ENCODE measurements at regions of chr9 and their contacts with region 1.

Region 1: DNA sequence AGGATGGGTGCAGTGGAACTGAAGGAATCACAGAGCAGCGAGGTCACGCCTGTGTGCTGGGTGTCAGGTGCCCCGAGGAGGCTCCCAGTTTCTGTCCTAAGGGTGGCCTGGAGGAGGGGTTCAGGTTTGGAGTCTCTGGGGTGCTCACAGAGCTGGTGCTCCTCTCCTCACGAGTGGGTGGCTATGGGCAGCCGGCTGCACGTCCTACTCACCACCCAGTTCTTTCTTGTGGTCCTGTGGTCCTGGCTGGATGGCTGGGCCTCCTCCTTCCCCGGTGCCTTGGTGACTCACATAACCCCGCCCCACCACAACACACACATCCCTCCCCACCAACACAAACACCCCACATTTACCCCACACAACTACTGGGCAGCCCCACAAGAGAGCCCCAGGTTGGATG is 9.9 kb upstream of the PTGS1 start:
- DNase-seq: no peak
- ATAC-seq: no peak
- H3K4me3 ChIP-seq: no peak overlapping the region
- H3K27ac ChIP-seq: no peak overlapping the region
- H3K4me1 ChIP-seq: no peaks in the 10 kb centered on the region
- H3K27me3 ChIP-seq: no peaks in the 10 kb centered on the region
- CTCF ChIP-seq: no peak
- POLR2A ChIP-seq: no peak

Region 2: DNA sequence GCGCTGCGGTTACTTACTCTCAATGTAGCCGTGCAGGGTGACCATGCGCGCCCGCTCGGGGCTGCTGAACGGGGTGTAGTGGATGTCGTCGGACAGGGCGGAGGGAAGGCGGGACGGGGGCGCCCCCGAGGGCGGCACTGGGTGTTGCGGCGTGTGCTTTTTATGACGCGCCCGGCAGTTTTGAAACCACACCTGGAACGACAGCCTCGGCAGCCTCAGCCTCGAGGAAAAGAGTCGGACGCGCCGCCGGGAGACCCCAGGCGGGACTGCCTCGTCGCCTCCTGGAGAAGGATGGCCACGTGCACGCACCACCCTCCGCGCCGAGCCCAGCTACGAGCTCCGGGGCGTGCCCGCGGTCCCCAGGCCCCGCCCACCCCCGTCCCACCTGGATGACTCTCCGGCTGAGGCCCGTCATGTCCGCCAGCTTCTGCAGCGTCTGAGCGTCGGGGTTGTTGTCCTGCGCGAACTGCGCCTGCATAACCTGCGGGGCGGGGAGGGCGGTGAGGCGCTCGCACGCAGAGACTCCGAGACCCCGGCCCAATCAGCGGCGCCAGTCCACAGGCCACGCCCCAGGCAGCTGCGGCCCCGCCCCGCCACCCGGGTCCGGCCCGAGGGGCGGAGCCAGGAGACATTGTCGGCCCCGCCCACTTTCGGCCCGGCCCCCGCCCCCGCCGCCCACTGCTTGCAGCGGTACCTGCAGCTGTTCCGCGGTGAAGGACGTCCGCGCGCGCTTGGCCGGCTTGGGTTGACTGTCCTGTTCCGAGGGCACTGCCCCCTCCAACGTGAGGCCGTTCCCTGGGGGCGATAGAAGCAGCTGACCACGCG is 147.1 kb before region 1 on chr9:
- in situ Hi-C with region 1: no loop called
- intact Hi-C with region 1: loop called (anchors 5 kb)
- DNase-seq: peak in 1 of 2 donors; percentile 21
- ATAC-seq: peak in 1 of 2 donors; percentile 33
- H3K4me3 ChIP-seq: peak overlapping the region; percentile 14 to 57 (median 33)
- H3K27ac ChIP-seq: no peak overlapping the region
- H3K4me1 ChIP-seq: peaks cover 6 to 10% of the 10 kb centered on the region in 2 donors
- H3K27me3 ChIP-seq: peaks cover 61 to 71% (median 64%) of the 10 kb centered on the region in 3 donors
- CTCF ChIP-seq: no peak
- POLR2A ChIP-seq: no peak

Region 3: DNA sequence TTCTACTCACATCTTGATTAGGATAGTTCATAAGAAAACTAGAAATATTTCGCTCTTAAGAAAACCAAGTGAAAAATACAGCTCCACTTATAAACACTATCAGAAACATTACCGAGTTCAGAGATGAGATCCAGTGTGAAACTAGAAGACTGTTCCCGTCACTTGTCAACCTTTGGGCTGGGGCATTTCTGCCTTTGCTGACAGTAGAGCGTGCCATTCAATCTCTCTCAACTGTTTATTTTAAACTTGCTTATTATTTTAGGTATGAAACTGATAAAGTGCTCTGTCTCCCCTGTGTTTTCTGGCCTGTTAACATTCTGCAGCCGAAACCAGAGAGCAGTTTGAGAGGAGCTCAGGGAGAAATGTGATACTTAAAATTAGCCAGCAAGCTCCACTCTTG is 79.5 kb before region 1 on chr9:
- in situ Hi-C with region 1: no loop called
- intact Hi-C with region 1: no loop called
- DNase-seq: no peak
- ATAC-seq: no peak
- H3K4me3 ChIP-seq: no peak overlapping the region
- H3K27ac ChIP-seq: no peak overlapping the region
- H3K4me1 ChIP-seq: peaks cover 11 to 14% of the 10 kb centered on the region in 2 donors
- H3K27me3 ChIP-seq: no peaks in the 10 kb centered on the region
- CTCF ChIP-seq: no peak
- POLR2A ChIP-seq: no peak

Region 4: DNA sequence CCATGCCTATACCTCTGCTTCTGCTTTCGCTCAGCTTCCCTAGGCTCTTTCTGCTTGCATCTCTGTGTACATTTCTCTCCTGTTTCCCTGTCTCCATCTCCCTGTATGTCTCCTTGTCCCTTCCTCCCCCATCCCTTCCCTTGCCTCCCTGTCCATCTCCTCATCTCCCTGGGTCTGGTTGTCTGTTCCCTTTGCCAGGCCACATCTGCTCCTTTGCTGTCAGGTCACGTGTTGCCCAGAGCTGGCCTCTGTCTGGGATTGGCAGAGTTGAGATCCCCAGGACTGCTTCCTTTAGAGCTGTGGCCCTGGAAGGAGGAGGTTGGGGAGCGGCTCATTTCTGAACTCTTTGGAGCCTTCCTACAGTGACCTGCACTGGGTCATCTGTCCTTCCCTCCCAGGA is 21.9 kb before region 1 on chr9:
- in situ Hi-C with region 1: no loop called
- intact Hi-C with region 1: no loop called
- DNase-seq: no peak
- ATAC-seq: no peak
- H3K4me3 ChIP-seq: no peak overlapping the region
- H3K27ac ChIP-seq: no peak overlapping the region
- H3K4me1 ChIP-seq: peaks cover 2 to 4% of the 10 kb centered on the region in 2 donors
- H3K27me3 ChIP-seq: no peaks in the 10 kb centered on the region
- CTCF ChIP-seq: no peak
- POLR2A ChIP-seq: no peak

Measured in gastrocnemius medialis (tissue), 4 donors.